ENCODE measurements at regions of chr2 and their contacts with region 1.

Region 1: DNA sequence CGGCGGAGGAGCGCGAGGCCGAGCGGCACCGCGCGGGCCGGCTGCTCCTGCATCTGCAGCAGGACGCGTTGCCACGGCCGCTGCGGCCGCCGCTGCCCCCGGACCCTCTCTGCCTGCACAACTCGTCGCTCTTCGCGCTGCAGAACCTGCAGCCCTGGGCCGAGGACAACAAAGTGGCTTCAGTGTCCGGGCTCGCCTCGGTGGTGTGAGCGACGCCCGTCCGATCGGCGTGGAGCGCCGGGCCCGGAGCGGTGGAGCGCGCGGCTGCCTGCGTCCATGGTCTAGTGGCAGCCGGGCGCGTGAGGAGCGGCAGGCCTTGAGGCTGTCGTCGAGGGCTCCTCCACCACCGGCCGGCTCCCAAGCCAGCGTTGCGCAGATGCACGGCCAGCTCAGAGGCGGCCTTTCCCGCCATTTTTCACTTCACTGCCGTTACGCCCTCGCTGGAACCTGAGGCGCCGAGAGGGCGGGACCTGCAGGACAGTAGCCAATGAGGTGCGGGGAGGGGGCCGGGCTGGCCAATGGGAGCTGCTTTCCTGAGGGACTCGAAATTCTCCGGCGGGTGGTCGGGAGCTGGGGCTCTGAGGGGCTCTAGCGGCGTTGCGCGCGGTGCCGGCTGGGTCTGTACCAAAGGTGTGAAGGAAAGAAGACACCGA is 1.9 kb downstream of the TLX2 start:
- DNase-seq: peak; percentile 79
- H3K4me3 Mint-ChIP-seq: peak overlapping the region; percentile 51
- H3K27ac Mint-ChIP-seq: no peak overlapping the region
- H3K4me1 Mint-ChIP-seq: peaks cover 17% of the 10 kb centered on the region
- H3K27me3 Mint-ChIP-seq: peaks cover 70% of the 10 kb centered on the region

Region 2: DNA sequence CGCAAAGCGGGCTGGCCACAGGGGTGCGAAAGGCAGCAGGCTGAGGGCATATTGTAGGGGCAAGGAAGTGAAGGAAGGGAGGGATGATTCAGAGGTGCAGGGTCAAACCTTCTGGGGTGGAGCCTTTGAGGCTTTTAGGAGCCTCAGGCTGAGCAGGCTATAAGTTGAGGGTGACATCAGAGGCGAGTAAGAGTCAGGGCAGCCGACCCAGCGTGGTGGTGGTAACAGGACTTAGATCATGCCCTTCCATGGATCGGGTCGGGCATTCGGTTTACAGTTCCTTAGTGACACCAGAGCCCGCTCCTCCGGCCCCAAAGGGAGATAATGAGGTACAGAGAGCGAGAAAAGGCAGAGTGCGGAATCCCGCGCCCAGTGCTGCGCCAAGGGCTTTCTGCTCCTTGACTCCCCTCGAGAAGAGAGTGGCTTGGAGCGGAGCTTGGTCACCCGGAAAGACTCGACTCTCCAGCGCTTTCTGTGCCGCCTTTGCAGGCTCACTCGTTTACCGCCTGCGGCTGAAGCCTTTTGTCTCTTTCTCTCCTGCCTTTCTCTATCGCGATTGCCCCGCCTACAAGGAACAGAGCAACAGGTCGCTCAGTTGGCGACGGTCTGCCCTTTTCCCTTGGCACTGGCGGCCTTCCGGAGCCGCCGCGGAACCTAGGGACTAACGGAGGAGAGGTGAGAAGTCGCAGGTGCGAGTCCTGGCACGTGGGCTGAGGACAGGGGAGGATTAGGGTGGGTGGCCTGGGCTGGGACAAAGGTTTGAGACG is 17.4 kb before region 1 on chr2:
- CTCF ChIA-PET with region 1: interaction called, 4 read pairs
- intact Hi-C with region 1: loop called (anchors 1 kb)
- DNase-seq: peak; percentile 45
- H3K4me3 Mint-ChIP-seq: peak overlapping the region; percentile 67
- H3K27ac Mint-ChIP-seq: no peak overlapping the region
- H3K4me1 Mint-ChIP-seq: peaks cover 34% of the 10 kb centered on the region
- H3K27me3 Mint-ChIP-seq: peaks cover 59% of the 10 kb centered on the region